HAP-1 (cell line): ENCODE measurements at regions of chr22 and their contacts with region 1.

Region 1: DNA sequence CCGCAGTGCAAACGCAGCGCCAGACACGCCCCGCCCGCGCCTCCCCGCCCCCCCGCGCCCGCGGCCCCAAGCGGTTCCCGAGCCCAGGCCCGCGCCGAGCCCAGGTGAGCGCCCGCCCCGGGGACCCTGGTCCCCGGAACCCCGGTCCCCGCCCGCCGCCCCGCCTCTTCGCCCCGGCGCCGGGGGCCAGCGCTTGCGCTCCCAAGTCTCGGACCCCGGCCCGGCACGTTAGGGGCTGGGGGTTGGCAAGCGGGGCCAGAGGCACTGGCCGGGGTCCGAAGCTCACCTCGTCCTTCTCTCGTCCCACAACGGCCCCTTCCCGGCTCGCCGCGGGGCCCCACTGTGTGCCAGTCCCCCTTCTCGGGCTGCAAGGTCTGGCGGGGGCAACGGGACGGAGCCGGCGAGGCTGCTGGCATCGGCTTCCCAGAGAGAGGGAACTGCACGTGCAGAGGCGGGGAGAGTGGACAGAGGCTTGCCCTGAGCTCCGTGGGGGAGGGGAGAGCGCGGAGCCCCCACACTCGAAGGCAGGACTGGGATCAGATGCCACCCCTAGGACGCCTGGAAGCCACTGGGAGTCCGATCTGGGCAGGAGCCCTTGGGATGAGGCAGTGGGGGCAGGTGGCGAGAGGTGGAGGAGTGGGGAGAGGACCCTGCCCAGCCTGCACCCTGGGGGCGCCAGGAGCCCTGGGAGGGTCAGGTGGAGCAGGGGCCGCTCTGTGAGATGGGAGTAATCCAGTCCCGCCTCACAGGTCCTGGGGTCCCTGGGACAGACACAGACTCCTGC is 1.8 kb upstream of the AIFM3 start:
- DNase-seq: no peak
- H3K4me3 ChIP-seq: no peak overlapping the region
- H3K4me1 ChIP-seq: no peaks in the 10 kb centered on the region
- H3K27me3 ChIP-seq: no peaks in the 10 kb centered on the region

Region 2: DNA sequence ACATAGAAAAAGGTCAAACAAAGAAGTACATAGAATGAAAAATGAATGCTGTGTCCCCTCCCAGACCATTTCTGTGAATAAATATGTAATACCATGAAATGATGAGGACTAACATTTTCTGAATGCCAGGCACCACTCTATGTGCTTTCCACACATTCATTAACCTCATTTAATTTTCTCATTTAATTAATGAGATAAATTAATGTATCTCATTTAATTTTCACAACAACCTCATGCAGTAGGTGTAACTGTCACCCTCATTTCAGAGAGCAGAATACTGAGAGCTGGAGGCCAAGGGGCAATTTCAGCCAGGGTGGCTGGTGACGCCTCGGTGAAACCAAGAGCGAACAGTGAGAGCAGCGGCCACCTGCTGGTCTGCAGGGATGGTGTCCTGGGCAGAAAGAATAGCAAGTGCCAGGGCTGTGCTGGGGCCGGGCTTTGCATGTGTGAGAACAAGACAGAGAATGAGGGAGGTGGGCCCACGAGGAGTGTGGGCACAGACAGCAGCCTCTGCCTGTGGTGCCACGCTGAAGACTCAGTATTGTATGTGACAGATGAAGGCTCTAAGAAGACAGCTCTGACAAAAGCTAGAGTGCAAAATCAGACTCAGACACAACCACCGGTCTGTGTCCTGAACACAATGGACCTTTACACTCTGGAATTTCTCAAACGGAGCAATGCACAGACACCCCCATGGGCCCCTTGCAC is 193.2 kb before region 1 on chr22:
- in situ Hi-C with region 1: no loop called
- DNase-seq: no peak
- H3K4me3 ChIP-seq: no peak overlapping the region
- H3K4me1 ChIP-seq: no peaks in the 10 kb centered on the region
- H3K27me3 ChIP-seq: no peaks in the 10 kb centered on the region

Region 3: GRCh38 chr22:21031971-21032867 is 66.9 kb after region 1 on chr22 and contains the start of gene SLC7A4:
- in situ Hi-C with region 1: no loop called
- DNase-seq: no peak
- H3K4me3 ChIP-seq: no peak within 1 kb of the TSS
- H3K4me1 ChIP-seq: no peaks in the 10 kb centered on the region
- H3K27me3 ChIP-seq: no peaks in the 10 kb centered on the region; the same call in none of the 2 replicates

Region 4: GRCh38 chr22:21065230-21065854 is 100.0 kb after region 1 on chr22:
- in situ Hi-C with region 1: loop called (anchors 10 kb)
- DNase-seq: no peak
- H3K4me3 ChIP-seq: no peak overlapping the region
- H3K4me1 ChIP-seq: no peaks in the 10 kb centered on the region
- H3K27me3 ChIP-seq: no peaks in the 10 kb centered on the region; the same call in 1 of the 2 replicates